ENCODE measurements at regions of chr17 and their contacts with region 1.

Region 1: DNA sequence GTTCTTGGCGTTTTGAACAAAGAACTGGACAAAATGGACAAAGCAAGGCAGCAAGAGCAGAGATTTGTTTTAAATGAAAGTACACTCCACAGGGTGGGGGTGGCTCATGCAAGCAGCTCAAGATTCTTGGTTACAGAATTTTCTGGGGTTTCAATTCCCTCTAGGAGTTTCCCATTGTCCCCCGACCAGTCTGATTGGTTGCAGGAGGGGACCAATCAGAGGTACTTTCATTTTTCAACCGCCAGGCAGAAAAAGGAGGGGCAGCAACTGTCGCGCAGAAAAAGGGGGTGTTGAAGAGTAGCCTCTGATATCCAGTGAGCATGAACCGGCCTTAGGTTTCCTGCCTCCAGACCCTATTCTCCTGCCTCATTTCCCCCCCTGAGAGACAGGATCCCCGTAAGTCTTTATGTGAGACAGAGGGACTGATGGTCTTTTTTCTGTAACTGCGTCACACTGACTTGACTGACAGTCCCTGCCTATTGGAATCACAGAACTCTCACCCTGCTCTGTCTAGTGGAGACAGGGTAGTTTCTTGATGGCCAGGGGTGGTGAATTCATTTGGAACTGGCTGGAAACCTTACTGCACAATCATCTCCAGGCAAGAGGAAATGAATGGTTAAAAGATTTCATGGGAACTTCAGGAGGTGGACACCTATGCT is 59.4 kb upstream of the ALOX12 start:
- DNase-seq: peak; percentile 69
- H3K4me3 ChIP-seq: peak overlapping the region; percentile 47
- H3K27ac ChIP-seq: peak overlapping the region; percentile 12
- H3K4me1 ChIP-seq: no peaks in the 10 kb centered on the region
- H3K27me3 ChIP-seq: no peaks in the 10 kb centered on the region
- CTCF ChIP-seq: no peak

Region 2: DNA sequence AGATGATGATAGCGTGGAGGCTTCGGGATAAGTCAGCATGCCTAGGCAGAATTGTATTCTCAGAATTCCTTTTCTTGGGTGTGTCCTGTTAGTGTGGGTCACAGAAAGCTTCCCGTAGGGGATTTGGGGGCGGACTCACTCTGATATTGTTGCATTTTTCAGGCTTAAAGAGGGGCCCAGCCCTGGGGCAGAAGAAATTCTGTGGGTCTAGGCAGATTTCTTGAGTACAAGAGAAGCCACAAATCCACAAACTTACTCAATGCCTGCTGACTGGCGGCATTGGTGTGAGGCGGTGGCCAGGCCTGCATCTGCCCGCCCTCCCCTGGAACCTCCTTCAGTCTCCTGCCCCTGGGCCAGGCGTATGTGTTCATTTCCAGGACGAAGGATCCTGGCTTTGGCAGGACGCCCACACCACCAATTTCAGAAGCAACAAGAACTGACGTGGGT is 1790.6 kb after region 1 on chr17:
- CTCF ChIA-PET with region 1: no interaction called
- POLR2A ChIA-PET with region 1: interaction called, 14 read pairs
- intact Hi-C with region 1: no loop called
- DNase-seq: no peak
- H3K4me3 ChIP-seq: no peak overlapping the region
- H3K27ac ChIP-seq: no peak overlapping the region
- H3K4me1 ChIP-seq: no peaks in the 10 kb centered on the region
- H3K27me3 ChIP-seq: no peaks in the 10 kb centered on the region
- CTCF ChIP-seq: no peak